ENCODE measurements at regions of chr7 and their contacts with region 1.

Region 1: DNA sequence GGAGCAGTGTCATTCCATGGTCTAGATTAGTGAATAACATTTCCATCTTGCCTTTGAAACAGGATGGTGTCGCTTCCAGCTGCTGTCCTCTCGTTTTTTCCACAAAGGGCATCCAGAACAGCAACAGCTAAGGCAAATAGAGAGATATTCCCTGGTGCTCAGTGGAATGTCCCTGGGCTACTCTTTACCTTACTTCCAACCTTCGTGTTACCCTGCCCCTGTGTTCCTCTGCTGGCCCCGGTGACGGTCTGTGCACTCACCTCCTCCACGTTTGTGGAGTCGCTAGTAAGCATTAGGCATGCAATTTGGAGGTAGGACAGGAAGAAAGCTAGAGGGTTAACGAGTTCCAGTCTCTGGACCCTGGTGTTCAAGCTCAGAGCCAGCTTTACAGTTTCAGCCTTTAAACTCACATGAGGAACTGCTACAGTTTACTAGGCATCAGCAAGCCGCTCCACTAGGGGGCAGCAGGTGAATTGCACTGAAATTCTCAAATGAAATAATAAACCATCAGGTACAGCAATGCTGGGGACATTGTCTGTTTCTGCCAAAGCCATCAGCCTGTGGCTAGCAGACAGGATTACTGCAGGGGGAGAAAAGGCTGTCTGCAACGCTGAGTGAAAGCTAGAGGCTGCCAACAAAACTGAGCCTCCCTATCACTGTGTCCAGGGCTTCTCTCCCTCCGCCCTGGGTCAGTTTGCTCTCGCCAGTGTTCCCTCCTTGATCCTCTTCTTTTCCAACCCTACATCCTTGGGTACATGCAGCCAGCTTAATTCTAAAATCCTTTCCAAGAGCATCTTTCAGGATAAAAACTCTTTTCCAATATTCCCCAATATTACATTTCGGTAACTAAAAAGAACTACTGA is 9.0 kb downstream of the MRPL32 start:
- DNase-seq: peak; percentile 51
- ATAC-seq: peak; percentile 83
- H3K4me3 ChIP-seq: no peak overlapping the region
- H3K27ac ChIP-seq: no peak overlapping the region
- H3K4me1 ChIP-seq: no peaks in the 10 kb centered on the region
- H3K27me3 ChIP-seq: no peaks in the 10 kb centered on the region
- CTCF ChIP-seq: peak; percentile 81 to 94 (median 92)
- POLR2A ChIP-seq: no peak
- RAD21 ChIP-seq: peak; percentile 90

Region 2: DNA sequence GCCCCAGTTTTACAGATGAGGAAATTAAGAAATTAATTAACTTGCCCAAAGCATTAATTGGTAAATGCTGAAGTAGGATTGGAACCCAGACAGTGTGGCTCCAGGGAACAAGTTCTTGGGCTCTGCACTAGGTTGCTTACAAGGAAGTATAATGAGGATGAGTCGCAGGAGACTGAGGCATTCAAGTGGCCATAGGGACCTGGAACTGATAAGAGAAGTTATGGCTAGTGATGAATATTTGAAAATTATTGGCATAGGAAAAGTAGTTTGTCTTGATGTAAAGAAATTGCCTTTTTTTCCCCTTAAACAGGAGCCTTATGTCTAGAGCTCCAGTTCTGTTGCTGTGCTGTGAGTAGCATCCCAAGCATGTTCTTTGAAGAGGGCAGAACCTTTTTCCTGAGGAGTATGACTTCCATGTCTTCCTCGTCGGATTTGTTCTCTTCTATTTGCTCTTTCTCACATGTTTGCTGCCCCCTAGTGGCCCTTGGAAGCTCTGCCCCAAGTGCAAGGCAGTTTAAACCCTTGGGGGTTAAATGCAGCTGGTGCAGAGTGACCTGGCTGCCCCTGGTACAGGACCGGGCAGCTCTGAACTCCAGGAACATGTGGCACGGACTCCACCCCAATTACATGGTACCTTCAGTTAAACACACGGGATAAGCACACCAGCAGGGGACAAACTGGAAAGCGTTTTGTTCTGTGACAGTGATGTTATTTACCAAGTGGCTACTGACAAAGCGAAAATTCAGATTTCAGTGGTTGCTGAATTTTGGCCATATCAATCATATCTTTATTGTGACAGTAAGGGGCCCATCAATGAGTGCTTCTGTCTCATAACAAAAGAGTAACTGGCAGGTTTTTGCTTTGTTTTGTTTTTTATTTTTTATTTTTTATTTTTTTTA is 320.0 kb after region 1 on chr7:
- CTCF ChIA-PET with region 1: interaction called, 15 read pairs
- POLR2A ChIA-PET with region 1: interaction called, 3 read pairs
- RAD21 ChIA-PET with region 1: interaction called in 1 of 2 experiments, 3 read pairs
- intact Hi-C with region 1: loop called (anchors 1 kb)
- DNase-seq: peak; percentile 79
- ATAC-seq: peak; percentile 98
- H3K4me3 ChIP-seq: no peak overlapping the region
- H3K27ac ChIP-seq: no peak overlapping the region
- H3K4me1 ChIP-seq: 0 out of 4 replicates have a peak, but pooled peaks cover 0 to 7% of the 10 kb centered on the region in 2 experiments
- H3K27me3 ChIP-seq: no peaks in the 10 kb centered on the region
- CTCF ChIP-seq: peak; percentile 83 to 97 (median 95)
- POLR2A ChIP-seq: no peak
- RAD21 ChIP-seq: peak; percentile 88

Region 3: DNA sequence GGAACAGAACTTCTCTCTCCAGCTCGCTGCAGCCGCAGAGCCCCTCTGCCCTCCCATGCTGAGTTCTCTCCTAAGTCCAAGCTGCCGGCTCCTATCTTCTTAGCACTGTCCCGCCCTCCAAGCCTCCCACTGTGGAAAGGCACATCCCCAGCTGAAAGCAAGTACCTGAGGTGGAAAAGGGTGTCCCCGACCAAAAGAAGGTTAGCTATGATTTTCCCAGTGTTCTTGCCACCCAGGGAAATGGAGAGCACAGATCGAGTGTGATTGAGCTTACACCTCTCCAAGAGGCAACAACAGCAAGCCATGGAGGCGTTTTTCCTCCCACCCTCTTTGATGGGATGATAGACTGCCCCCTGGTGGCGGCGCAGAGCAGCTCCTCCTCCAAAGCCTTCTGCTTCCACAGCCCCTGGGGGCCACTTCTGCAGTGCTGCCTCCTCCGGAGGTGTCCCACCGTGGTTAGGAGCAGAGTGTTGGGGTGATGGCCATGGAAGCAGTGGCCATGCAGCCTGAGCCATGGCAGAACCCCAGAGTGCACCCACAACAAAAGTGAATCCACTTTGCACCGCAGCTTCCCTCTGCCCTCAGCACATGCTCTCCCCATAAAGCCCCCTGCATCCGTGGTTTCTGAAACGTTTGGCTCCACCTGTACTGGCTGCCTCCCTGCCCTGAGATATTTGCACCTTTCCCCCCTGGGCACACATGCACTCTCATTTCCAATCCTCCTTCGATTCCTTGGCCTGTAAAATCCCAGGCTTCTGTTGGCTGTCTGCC is 498.6 kb after region 1 on chr7:
- CTCF ChIA-PET with region 1: interaction called, 12 read pairs
- POLR2A ChIA-PET with region 1: no interaction called
- RAD21 ChIA-PET with region 1: no interaction called
- intact Hi-C with region 1: loop called (anchors 1 kb)
- DNase-seq: peak; percentile 38
- ATAC-seq: peak; percentile 99
- H3K4me3 ChIP-seq: no peak overlapping the region
- H3K27ac ChIP-seq: no peak overlapping the region
- H3K4me1 ChIP-seq: no peaks in the 10 kb centered on the region
- H3K27me3 ChIP-seq: no peaks in the 10 kb centered on the region
- CTCF ChIP-seq: peak; percentile 60 to 94 (median 91)
- POLR2A ChIP-seq: no peak
- RAD21 ChIP-seq: peak; percentile 69

Region 4: GRCh38 chr7:43700059-43700501 is 758.9 kb after region 1 on chr7:
- CTCF ChIA-PET with region 1: no interaction called
- POLR2A ChIA-PET with region 1: no interaction called
- RAD21 ChIA-PET with region 1: no interaction called
- intact Hi-C with region 1: loop called (anchors 2 kb)
- DNase-seq: peak; percentile 31
- ATAC-seq: peak; percentile 60
- H3K4me3 ChIP-seq: no peak overlapping the region
- H3K27ac ChIP-seq: no peak overlapping the region
- H3K4me1 ChIP-seq: peaks cover 6 to 14% of the 10 kb centered on the region in 2 experiments
- H3K27me3 ChIP-seq: no peaks in the 10 kb centered on the region
- CTCF ChIP-seq: peak; percentile 57 to 95 (median 68)
- POLR2A ChIP-seq: no peak
- RAD21 ChIP-seq: peak; percentile 91

Measured in HCT116 (cell line).